ENCODE measurements at regions of chr17 and their contacts with region 1.

Region 1: DNA sequence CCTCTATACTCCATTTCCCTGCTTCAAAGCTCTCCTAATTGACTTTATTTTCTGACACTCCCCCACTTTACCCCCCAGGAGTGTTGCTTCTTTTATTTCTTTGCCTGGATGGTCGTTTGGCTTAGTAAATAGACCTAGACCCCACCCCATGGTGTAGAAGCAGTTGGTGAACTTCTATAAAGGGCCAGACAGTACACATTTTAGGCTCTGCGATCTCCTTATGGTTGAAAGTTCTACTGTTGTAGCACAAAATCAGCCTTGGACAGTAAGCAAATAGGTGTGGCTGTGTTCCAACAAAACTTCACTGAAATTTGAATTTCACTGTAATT is 31.9 kb downstream of the ZNF287 start:
- DNase-seq: no peak
- H3K4me3 ChIP-seq: peak overlapping the region in 1 of 2 donors; percentile 71
- H3K27ac ChIP-seq: no peak overlapping the region
- H3K4me1 ChIP-seq: peaks cover 0 to 3% of the 10 kb centered on the region in 2 donors
- H3K27me3 ChIP-seq: no peaks in the 10 kb centered on the region
- CTCF ChIP-seq: no peak

Region 2: DNA sequence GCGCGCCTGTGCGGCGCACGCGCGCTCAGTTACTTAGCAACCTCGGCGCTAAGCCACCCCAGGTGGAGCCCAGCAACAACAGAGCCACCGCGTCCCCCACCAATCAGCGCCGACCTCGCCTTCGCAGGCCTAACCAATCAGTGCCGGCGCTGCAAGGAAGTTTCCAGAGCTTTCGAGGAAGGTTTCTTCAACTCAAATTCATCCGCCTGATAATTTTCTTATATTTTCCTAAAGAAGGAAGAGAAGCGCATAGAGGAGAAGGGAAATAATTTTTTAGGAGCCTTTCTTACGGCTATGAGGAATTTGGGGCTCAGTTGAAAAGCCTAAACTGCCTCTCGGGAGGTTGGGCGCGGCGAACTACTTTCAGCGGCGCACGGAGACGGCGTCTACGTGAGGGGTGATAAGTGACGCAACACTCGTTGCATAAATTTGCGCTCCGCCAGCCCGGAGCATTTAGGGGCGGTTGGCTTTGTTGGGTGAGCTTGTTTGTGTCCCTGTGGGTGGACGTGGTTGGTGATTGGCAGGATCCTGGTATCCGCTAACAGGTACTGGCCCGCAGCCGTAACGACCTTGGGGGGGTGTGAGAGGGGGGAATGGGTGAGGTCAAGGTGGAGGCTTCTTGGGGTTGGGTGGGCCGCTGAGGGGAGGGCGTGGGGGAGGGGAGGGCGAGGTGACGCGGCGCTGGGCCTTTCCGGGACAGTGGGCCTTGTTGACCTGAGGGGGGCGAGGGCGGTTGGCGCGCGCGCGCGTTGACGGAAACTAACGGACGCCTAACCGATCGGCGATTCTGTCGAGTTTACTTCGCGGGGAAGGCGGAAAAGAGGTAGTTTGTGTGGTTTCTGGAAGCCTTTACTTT is 156.2 kb before region 1 on chr17 and contains the start of gene UBB:
- intact Hi-C with region 1: no loop called
- DNase-seq: peak; percentile 92 to 97
- H3K4me3 ChIP-seq: peak within 1 kb of the TSS; percentile 82 to 83
- H3K27ac ChIP-seq: peak within 1 kb of the TSS; percentile 90 to 94
- H3K4me1 ChIP-seq: peaks cover 8 to 15% of the 10 kb centered on the region in 2 donors
- H3K27me3 ChIP-seq: no peaks in the 10 kb centered on the region
- CTCF ChIP-seq: no peak
- total RNA-seq, gene UBB: 615 TPM

Region 3: DNA sequence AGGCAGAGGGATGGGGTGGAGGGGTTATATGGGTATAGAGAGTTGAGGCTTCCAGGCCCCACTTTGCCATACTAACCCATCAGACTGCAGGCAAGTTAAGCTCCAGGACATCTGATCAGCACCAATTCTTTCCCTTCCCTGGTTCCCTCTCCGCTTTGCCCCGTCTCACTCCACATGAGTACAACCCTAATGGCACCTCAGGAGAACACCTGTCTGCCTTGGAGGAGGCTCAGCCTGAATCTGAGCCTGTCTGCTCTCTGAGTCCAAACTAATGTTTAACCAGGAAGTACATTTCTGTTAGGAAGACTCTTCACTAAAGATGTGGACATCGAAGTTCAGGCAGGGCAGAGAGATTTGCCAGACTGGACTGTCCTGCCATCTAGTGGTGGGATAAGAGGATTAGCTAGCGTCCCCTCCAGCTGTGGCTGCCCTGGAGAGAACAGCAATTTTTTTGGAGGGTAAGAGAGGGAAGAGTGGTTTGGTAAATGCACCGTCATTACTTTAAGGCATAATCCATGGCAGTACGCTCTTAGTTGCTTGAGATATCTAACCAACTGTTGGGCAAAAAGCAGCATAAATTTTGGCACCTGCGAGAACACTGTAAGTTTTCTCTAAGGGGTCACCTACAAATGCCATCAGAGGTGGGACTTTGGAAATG is 15.9 kb before region 1 on chr17:
- intact Hi-C with region 1: no loop called
- DNase-seq: peak in 1 of 2 donors; percentile 87
- H3K4me3 ChIP-seq: no peak overlapping the region
- H3K27ac ChIP-seq: no peak overlapping the region
- H3K4me1 ChIP-seq: peaks cover 0 to 8% of the 10 kb centered on the region in 2 donors
- H3K27me3 ChIP-seq: no peaks in the 10 kb centered on the region
- CTCF ChIP-seq: peak; percentile 88 to 90 (median 89)

Region 4: DNA sequence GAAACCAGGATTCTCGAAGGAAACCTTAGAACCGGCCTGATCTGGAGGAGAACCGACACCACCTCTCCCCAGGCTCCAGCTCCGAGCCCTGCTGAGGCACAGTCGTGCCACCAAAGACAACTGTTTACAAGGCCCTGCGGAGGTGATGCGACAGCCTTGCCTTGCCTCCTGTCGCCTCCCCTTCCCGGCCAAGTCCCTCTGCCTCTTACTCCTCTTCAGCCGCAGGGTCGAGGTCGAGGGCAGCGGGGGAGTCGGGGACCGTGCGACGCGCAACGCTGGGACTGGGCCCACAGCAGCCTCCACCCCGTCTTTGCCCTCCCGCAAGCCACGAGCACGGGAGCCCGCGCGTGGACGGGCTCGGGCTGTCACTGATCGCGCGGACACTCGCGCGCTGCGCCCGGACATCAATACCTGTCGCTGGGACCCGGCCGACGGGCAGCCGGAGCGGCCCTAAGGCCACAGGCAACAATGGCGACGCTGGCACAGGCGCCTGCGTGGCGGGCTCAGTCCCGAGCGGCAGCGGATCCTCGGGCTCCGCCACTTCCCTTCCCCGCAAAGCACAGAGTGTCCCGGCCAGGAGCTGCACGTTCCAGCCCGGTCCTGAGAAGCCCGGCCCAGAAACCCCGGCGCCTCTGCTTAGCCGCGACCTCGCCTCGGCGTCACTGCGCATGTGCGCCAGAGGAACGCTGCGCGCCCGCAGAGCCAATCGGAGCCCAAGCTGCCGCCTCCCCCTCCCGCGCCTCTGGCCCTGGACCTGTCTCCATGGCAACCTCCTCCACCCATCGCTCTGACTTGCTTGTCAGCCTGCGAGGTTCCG is 31.7 kb after region 1 on chr17 and contains the start of gene ZNF287:
- intact Hi-C with region 1: loop called (anchors 2 kb)
- DNase-seq: peak; percentile 71 to 96
- H3K4me3 ChIP-seq: peak within 1 kb of the TSS; percentile 71 to 89
- H3K27ac ChIP-seq: peak within 1 kb of the TSS; percentile 64 to 81
- H3K4me1 ChIP-seq: peaks cover 0 to 5% of the 10 kb centered on the region in 2 donors
- H3K27me3 ChIP-seq: no peaks in the 10 kb centered on the region
- CTCF ChIP-seq: no peak
- total RNA-seq, gene ZNF287: 2.9 TPM

Region 5: DNA sequence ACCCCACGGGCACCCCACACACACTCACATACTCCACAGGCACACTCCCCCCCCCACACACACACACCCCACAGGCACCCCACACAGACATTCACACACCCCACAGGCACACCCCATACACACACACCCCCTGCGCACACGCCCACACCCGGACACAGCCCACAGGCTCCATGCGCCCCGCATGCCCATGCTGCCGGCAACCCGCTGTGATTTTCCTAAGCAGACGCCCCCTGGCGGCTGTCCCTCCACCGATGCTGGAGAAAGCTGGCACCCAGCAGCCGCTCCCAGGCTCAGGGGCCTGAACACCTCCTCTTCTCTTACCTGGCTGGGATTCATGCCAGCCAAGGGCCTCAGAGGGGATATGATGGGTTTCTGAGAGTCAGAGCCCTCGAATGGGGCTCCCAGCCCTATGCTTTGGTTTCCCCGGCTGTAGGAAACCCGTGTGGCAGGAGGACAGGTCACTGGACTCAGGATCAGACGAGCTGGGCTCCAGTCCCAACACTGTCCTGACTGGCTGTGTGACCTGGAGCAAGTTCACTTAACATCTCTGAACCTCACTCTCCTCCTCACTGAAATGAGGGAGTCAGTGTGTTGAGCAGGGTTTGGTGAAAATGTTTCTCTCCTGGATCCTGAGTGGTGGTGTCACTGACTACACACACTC is 454.4 kb after region 1 on chr17:
- intact Hi-C with region 1: loop called (anchors 2 kb)
- DNase-seq: peak in 1 of 2 donors; percentile 90
- H3K4me3 ChIP-seq: no peak overlapping the region
- H3K27ac ChIP-seq: no peak overlapping the region
- H3K4me1 ChIP-seq: no peaks in the 10 kb centered on the region
- H3K27me3 ChIP-seq: no peaks in the 10 kb centered on the region
- CTCF ChIP-seq: peak; percentile 64 to 86 (median 78)

Measured in ascending aorta (tissue), 2 donors.